ENCODE measurements at regions of chr3 and their contacts with region 1.

Region 1: GRCh38 chr3:185733980-185734724 is 90.7 kb downstream of the IGF2BP2 start:
- DNase-seq: peak; percentile 89
- ATAC-seq: peak; percentile 31
- H3K4me3 ChIP-seq: no peak overlapping the region
- H3K27ac ChIP-seq: no peak overlapping the region
- H3K4me1 ChIP-seq: peaks cover 34% of the 10 kb centered on the region
- H3K27me3 ChIP-seq: no peaks in the 10 kb centered on the region
- CTCF ChIP-seq: peak; percentile 79
- POLR2A ChIP-seq: no peak
- RAD21 ChIP-seq: peak; percentile 84

Region 2: DNA sequence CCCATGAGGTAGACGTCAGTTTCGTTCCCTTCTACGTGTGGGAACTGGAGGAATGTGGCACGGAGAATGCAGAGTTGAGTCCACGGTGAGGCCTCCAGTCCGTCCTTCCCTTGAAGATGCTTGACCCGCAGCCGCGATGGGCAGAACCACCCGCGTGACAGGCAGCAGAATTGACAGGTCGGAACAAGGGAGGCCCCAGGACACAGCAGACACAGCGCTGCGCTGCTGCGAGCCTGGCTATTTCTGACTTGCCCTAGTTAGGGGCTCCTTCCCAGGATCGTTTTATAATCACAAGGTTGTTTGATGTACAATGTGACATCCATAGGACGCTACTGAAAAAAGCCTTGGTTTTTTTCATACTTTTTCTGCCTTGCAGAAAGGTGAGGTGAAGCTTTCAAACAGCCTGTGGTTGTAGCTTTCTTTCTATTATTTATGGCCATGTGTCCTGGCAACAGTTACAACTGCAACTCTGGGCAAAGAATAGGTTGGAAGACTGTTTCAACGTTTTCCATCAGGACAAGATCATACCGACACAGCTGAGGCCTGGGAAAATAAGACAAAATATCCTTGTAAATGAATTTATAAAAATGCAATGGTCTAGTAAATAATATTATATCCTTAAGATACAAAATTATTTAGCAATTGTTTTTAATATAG is 225.7 kb before region 1 on chr3:
- CTCF ChIA-PET with region 1: no interaction called
- POLR2A ChIA-PET with region 1: no interaction called
- dilution Hi-C with region 1: no loop called
- in situ Hi-C with region 1: no loop called
- intact Hi-C with region 1: no loop called
- DNase-seq: no peak
- ATAC-seq: no peak
- H3K4me3 ChIP-seq: no peak overlapping the region
- H3K27ac ChIP-seq: no peak overlapping the region
- H3K4me1 ChIP-seq: no peaks in the 10 kb centered on the region
- H3K27me3 ChIP-seq: peaks cover 10% of the 10 kb centered on the region
- CTCF ChIP-seq: no peak
- POLR2A ChIP-seq: no peak
- RAD21 ChIP-seq: no peak

Region 3: GRCh38 chr3:185561374-185561943 is 172.7 kb before region 1 on chr3:
- CTCF ChIA-PET with region 1: no interaction called
- POLR2A ChIA-PET with region 1: no interaction called
- dilution Hi-C with region 1: no loop called
- in situ Hi-C with region 1: no loop called
- intact Hi-C with region 1: no loop called
- DNase-seq: no peak
- ATAC-seq: no peak
- H3K4me3 ChIP-seq: no peak overlapping the region
- H3K27ac ChIP-seq: no peak overlapping the region
- H3K4me1 ChIP-seq: no peaks in the 10 kb centered on the region
- H3K27me3 ChIP-seq: peaks cover 12% of the 10 kb centered on the region
- CTCF ChIP-seq: no peak
- POLR2A ChIP-seq: no peak
- RAD21 ChIP-seq: no peak

Region 4: GRCh38 chr3:185572183-185572582 is 162.0 kb before region 1 on chr3:
- CTCF ChIA-PET with region 1: no interaction called
- POLR2A ChIA-PET with region 1: no interaction called
- dilution Hi-C with region 1: no loop called
- in situ Hi-C with region 1: no loop called
- intact Hi-C with region 1: no loop called
- DNase-seq: no peak
- ATAC-seq: no peak
- H3K4me3 ChIP-seq: no peak overlapping the region
- H3K27ac ChIP-seq: no peak overlapping the region
- H3K4me1 ChIP-seq: no peaks in the 10 kb centered on the region
- H3K27me3 ChIP-seq: no peaks in the 10 kb centered on the region
- CTCF ChIP-seq: no peak
- POLR2A ChIP-seq: no peak
- RAD21 ChIP-seq: no peak

Region 5: GRCh38 chr3:185677146-185677829 is 56.9 kb before region 1 on chr3:
- CTCF ChIA-PET with region 1: interaction called, 8 read pairs
- POLR2A ChIA-PET with region 1: no interaction called
- dilution Hi-C with region 1: no loop called
- in situ Hi-C with region 1: no loop called
- intact Hi-C with region 1: loop called (anchors 1 kb)
- DNase-seq: peak; percentile 77
- ATAC-seq: peak; percentile 94
- H3K4me3 ChIP-seq: no peak overlapping the region
- H3K27ac ChIP-seq: no peak overlapping the region
- H3K4me1 ChIP-seq: no peaks in the 10 kb centered on the region
- H3K27me3 ChIP-seq: no peaks in the 10 kb centered on the region
- CTCF ChIP-seq: peak; percentile 65
- POLR2A ChIP-seq: no peak
- RAD21 ChIP-seq: peak; percentile 78

Region 6: GRCh38 chr3:185702262-185703225 is 31.6 kb before region 1 on chr3:
- CTCF ChIA-PET with region 1: no interaction called
- POLR2A ChIA-PET with region 1: no interaction called
- dilution Hi-C with region 1: no loop called
- in situ Hi-C with region 1: no loop called
- intact Hi-C with region 1: no loop called
- DNase-seq: no peak
- ATAC-seq: peak; percentile 10; the same call in 1 of the 2 replicates
- H3K4me3 ChIP-seq: no peak overlapping the region
- H3K27ac ChIP-seq: no peak overlapping the region
- H3K4me1 ChIP-seq: peaks cover 18% of the 10 kb centered on the region
- H3K27me3 ChIP-seq: no peaks in the 10 kb centered on the region
- CTCF ChIP-seq: no peak
- POLR2A ChIP-seq: no peak
- RAD21 ChIP-seq: no peak

Region 7: GRCh38 chr3:185813691-185814215 is 79.6 kb after region 1 on chr3:
- CTCF ChIA-PET with region 1: no interaction called
- POLR2A ChIA-PET with region 1: no interaction called
- dilution Hi-C with region 1: no loop called
- in situ Hi-C with region 1: loop called (anchors 5 kb)
- intact Hi-C with region 1: no loop called
- DNase-seq: peak; percentile 86
- ATAC-seq: peak; percentile 90
- H3K4me3 ChIP-seq: no peak overlapping the region
- H3K27ac ChIP-seq: peak overlapping the region; percentile 69
- H3K4me1 ChIP-seq: peaks cover 29% of the 10 kb centered on the region
- H3K27me3 ChIP-seq: no peaks in the 10 kb centered on the region
- CTCF ChIP-seq: no peak
- POLR2A ChIP-seq: no peak
- RAD21 ChIP-seq: no peak

Region 8: GRCh38 chr3:185914911-185915629 is 180.9 kb after region 1 on chr3:
- CTCF ChIA-PET with region 1: interaction called, 3 read pairs
- POLR2A ChIA-PET with region 1: no interaction called
- dilution Hi-C with region 1: no loop called
- in situ Hi-C with region 1: loop called (anchors 10 kb)
- intact Hi-C with region 1: loop called (anchors 5 kb)
- DNase-seq: no peak
- ATAC-seq: no peak
- H3K4me3 ChIP-seq: no peak overlapping the region
- H3K27ac ChIP-seq: no peak overlapping the region
- H3K4me1 ChIP-seq: no peaks in the 10 kb centered on the region
- H3K27me3 ChIP-seq: no peaks in the 10 kb centered on the region
- CTCF ChIP-seq: no peak
- POLR2A ChIP-seq: peak; percentile 14; the same call in 1 of the 2 replicates
- RAD21 ChIP-seq: no peak

Region 9: DNA sequence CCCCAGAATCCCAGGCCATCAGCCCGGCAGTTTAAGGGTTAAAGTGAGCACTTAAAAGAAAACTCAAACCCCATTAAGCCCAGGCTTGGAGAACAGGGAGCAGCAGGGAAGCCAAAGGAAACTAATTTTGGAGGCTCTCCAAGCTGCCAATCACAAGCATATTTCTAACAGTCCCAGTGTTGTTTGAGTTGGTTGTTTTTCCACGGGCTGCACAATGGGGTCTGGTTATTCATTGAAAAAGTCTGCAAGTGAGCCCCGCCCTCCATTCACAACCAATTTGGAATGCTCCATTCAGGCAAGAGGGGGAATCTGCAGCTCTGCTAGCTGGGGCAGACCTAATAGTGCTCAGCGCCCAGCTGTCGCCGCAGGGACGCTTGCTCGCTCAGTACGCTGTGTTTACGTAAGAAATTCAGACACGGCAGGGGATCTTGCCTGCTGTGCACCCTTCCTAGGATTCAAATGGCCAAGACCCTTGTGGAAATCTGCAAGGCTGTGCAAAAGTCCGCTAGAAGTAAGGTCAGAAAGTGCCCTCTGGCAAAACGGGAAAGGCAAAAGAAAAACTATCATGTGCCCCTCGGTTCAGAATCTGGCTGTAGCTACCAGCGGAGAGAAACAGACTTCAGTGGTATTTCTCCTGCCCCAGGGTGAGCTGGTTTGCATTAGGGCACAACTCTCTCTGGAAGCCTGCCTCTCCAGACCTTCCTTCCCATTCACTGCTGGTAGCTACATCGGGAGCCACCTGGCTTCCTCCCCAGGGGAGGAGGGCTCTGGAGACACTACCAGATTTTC is 363.7 kb after region 1 on chr3:
- CTCF ChIA-PET with region 1: no interaction called
- POLR2A ChIA-PET with region 1: no interaction called
- dilution Hi-C with region 1: no loop called
- in situ Hi-C with region 1: no loop called
- intact Hi-C with region 1: loop called (anchors 5 kb)
- DNase-seq: peak; percentile 78
- ATAC-seq: peak; percentile 91
- H3K4me3 ChIP-seq: peak overlapping the region; percentile 25
- H3K27ac ChIP-seq: no peak overlapping the region
- H3K4me1 ChIP-seq: peaks cover 13% of the 10 kb centered on the region
- H3K27me3 ChIP-seq: no peaks in the 10 kb centered on the region
- CTCF ChIP-seq: no peak
- POLR2A ChIP-seq: no peak
- RAD21 ChIP-seq: no peak